ENCODE measurements at regions of chr4 and their contacts with region 1.

Region 1: DNA sequence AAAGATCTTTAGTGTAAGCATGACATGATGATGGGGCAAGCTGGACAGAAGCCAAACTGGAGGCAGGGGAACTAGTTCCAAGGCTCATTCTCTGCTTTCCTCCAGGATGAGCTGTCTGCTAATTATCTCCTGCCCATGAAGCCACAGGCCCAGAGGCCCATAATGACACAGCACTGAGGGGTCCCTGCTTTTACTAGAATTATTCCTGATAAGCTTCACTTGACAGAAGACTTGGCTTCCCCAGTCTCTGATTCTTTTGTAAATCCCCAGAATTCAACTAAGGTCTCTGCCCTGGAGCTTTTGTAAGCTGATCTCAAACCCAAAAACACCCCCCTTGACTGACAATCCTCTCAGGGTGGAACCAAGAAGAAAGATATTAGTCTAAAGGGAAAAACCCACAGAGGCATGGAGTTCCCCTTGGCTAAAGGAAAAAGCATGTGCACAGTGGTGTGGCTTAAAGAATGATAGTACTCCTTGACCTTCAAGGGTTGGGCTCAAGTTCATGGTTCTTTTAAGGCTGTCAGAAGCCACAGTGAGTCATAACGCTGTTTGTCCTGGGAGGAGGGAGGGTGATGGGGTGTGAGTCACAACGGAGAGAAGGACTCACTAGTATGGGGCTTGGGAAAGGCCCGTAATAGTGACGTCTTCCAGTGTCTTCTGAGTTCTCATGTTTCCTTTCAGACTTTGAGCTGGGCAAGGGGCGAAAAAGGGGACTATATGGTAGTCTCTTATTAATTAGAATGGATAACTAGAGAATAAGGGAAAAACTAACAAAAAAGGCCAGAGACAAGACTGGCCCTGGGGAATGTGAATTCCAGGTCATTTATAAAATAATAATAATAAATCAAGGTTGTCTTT is 146.0 kb upstream of the CPEB2 start:
- DNase-seq: peak; percentile 96
- ATAC-seq: peak; percentile 96
- H3K4me3 ChIP-seq: no peak overlapping the region
- H3K27ac ChIP-seq: peak overlapping the region; percentile 51
- H3K4me1 ChIP-seq: peaks cover 20% of the 10 kb centered on the region
- H3K27me3 ChIP-seq: no peaks in the 10 kb centered on the region
- CTCF ChIP-seq: no peak
- EP300 ChIP-seq: peak; percentile 81 to 92; a peak in 3 of 4 replicates
- POLR2A ChIP-seq: no peak
- RAD21 ChIP-seq: peak; percentile 27; the same call in 1 of the 2 replicates

Region 2: GRCh38 chr4:13821522-13821921 is 1034.8 kb before region 1 on chr4:
- CTCF ChIA-PET with region 1: no interaction called
- POLR2A ChIA-PET with region 1: no interaction called
- RAD21 ChIA-PET with region 1: no interaction called
- SMC1A ChIA-PET with region 1: no interaction called
- in situ Hi-C with region 1: no loop called
- intact Hi-C with region 1: no loop called
- DNase-seq: no peak
- ATAC-seq: no peak
- H3K4me3 ChIP-seq: no peak overlapping the region
- H3K27ac ChIP-seq: no peak overlapping the region
- H3K4me1 ChIP-seq: no peaks in the 10 kb centered on the region
- H3K27me3 ChIP-seq: no peaks in the 10 kb centered on the region
- CTCF ChIP-seq: no peak
- EP300 ChIP-seq: no peak
- POLR2A ChIP-seq: no peak
- RAD21 ChIP-seq: no peak

Region 3: GRCh38 chr4:14787894-14788293 is 68.4 kb before region 1 on chr4:
- CTCF ChIA-PET with region 1: no interaction called
- POLR2A ChIA-PET with region 1: no interaction called
- RAD21 ChIA-PET with region 1: no interaction called
- SMC1A ChIA-PET with region 1: interaction called, 6 read pairs
- in situ Hi-C with region 1: no loop called
- intact Hi-C with region 1: loop called (anchors 5 kb)
- DNase-seq: no peak
- ATAC-seq: peak; percentile 50
- H3K4me3 ChIP-seq: no peak overlapping the region
- H3K27ac ChIP-seq: no peak overlapping the region
- H3K4me1 ChIP-seq: 0 out of 2 replicates have a peak, but pooled peaks cover 3% of the 10 kb centered on the region
- H3K27me3 ChIP-seq: no peaks in the 10 kb centered on the region
- CTCF ChIP-seq: peak in 2 of 3 experiments; percentile 34 to 46; a peak in 3 of 6 replicates
- EP300 ChIP-seq: no peak
- POLR2A ChIP-seq: no peak
- RAD21 ChIP-seq: peak; percentile 44

Region 4: DNA sequence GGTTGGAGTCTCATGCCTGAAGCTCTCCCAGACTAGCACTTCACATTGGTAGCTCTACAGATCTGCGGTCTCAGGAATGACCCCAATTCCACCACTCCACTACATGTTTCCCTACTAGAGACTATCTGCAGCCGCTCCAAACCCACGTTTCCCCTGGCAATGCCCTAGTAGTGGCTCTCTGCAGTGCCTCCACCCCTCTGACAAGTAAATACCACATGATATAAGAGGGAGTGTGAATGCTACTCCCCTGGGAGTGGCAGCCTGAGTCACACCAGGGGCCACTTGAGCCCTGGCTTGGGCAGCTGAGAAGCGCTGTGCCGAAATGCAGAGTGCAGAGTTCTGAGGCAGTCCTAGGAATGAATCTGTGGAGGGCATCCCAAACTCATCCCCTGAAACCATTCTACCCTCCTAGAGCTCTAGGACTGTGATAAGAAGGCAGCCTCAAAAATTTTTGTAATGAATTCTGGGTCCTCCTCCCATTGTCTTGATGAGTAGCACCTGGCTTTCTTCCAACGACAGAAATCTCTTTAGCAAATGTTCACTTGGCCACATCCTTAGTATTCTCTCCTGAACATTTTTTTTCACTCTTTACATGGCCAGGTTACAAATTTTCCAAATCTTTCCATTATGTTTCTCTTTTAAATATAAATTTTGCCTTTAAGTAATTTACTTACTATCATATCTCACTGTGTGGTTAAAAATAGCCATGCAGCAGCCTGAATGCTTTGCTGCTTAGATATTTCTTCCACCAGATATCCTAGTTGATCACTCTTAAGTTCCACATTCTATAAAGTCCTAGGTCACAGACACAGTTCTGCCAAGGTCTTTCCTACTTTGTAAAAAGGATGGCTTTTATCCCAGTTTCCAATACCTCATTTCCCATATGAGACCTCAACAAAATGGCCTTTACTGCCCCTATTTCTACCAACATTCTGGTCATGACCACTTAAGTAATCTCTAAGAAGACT is 14.2 kb before region 1 on chr4:
- CTCF ChIA-PET with region 1: interaction called, 4 read pairs
- POLR2A ChIA-PET with region 1: interaction called, 3 read pairs
- RAD21 ChIA-PET with region 1: interaction called, 6 read pairs
- SMC1A ChIA-PET with region 1: interaction called, 28 read pairs
- in situ Hi-C with region 1: no loop called
- intact Hi-C with region 1: no loop called
- DNase-seq: no peak
- ATAC-seq: peak; percentile 26; the same call in 2 of the 3 replicates
- H3K4me3 ChIP-seq: no peak overlapping the region
- H3K27ac ChIP-seq: no peak overlapping the region
- H3K4me1 ChIP-seq: no peaks in the 10 kb centered on the region
- H3K27me3 ChIP-seq: no peaks in the 10 kb centered on the region
- CTCF ChIP-seq: no peak
- EP300 ChIP-seq: no peak
- POLR2A ChIP-seq: no peak
- RAD21 ChIP-seq: no peak

Region 5: DNA sequence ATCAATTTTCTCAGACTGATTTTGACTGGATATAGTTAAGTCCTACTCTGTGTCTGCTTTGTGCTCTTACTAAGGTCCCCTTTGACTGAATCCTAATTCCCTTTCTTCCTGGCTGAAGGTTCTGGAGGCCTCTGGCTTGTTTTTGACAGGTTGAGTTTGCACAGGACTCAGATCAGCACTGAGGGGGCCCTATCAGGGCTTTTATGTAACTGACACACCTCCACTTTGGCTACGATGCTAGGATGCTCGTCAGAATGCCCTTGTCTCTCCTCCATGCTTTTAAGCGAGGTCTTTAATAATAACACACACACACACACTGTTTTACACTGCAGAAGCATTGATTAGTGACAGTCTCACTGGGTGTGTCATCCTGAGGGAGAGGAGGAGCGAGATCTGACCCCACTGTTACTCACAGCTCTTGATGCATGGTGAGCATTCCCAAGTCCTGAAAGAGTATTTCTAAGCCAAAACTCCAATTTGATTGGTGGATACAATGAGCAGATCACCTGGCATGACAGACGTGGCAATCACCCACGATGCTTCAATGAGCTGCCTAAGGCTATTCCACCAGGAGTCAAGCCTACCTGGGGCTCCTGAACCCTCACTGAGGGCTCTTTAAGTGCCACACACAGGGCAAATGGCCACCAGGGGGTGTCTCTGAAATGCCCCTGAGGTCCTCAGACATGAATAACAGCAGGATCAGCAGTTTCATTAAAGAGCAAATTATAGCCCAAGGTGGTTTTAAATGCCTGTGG is 15.5 kb after region 1 on chr4:
- CTCF ChIA-PET with region 1: interaction called, 8 read pairs
- POLR2A ChIA-PET with region 1: no interaction called
- RAD21 ChIA-PET with region 1: interaction called, 4 read pairs
- SMC1A ChIA-PET with region 1: interaction called, 14 read pairs
- in situ Hi-C with region 1: no loop called
- intact Hi-C with region 1: no loop called
- DNase-seq: no peak
- ATAC-seq: peak; percentile 64
- H3K4me3 ChIP-seq: no peak overlapping the region
- H3K27ac ChIP-seq: no peak overlapping the region
- H3K4me1 ChIP-seq: peaks cover 26% of the 10 kb centered on the region
- H3K27me3 ChIP-seq: no peaks in the 10 kb centered on the region
- CTCF ChIP-seq: peak; percentile 29 to 57 (median 45); a peak in 5 of 6 replicates
- EP300 ChIP-seq: no peak
- POLR2A ChIP-seq: no peak
- RAD21 ChIP-seq: peak; percentile 57